H1 (cell line): ENCODE measurements at regions of chr10 and their contacts with region 1.

Region 1: GRCh38 chr10:101569838-101570766 is 18.0 kb downstream of the POLL start:
- DNase-seq: peak in 1 of 2 experiments; percentile 95
- H3K4me3 ChIP-seq: peak overlapping the region; percentile 34 to 72 (median 66)
- H3K27ac ChIP-seq: no peak overlapping the region
- H3K4me1 ChIP-seq: peaks cover 0 to 20% (median 10%) of the 10 kb centered on the region in 4 experiments; a peak in 5 of 7 replicates
- H3K27me3 ChIP-seq: peaks cover 7 to 73% (median 57%) of the 10 kb centered on the region in 4 experiments
- CTCF ChIP-seq: peak; percentile 61 to 79 (median 79)
- EP300 ChIP-seq: no peak
- POLR2A ChIP-seq: no peak
- RAD21 ChIP-seq: peak; percentile 75 to 85

Region 2: GRCh38 chr10:101297901-101298486 is 272.1 kb before region 1 on chr10:
- CTCF ChIA-PET with region 1: interaction called, 33 read pairs
- POLR2A ChIA-PET with region 1: interaction called, 3 read pairs
- DNase-seq: peak; percentile 74 to 96
- H3K4me3 ChIP-seq: no peak overlapping the region
- H3K27ac ChIP-seq: no peak overlapping the region
- H3K4me1 ChIP-seq: peaks cover 0 to 3% (median 0%) of the 10 kb centered on the region in 4 experiments; a peak in 1 of 7 replicates
- H3K27me3 ChIP-seq: peaks cover 7 to 39% (median 29%) of the 10 kb centered on the region in 4 experiments
- CTCF ChIP-seq: peak; percentile 88 to 98 (median 96)
- EP300 ChIP-seq: no peak
- POLR2A ChIP-seq: no peak
- RAD21 ChIP-seq: peak; percentile 51 to 61

Region 3: GRCh38 chr10:101467286-101467770 is 102.8 kb before region 1 on chr10:
- CTCF ChIA-PET with region 1: interaction called, 12 read pairs
- POLR2A ChIA-PET with region 1: no interaction called
- DNase-seq: no peak
- H3K4me3 ChIP-seq: no peak overlapping the region
- H3K27ac ChIP-seq: no peak overlapping the region
- H3K4me1 ChIP-seq: peaks cover 1 to 6% (median 4%) of the 10 kb centered on the region in 4 experiments; a peak in 5 of 7 replicates
- H3K27me3 ChIP-seq: no peaks in the 10 kb centered on the region
- CTCF ChIP-seq: peak in 2 of 3 experiments; percentile 75 to 85; a peak in 3 of 4 replicates
- EP300 ChIP-seq: no peak
- POLR2A ChIP-seq: no peak
- RAD21 ChIP-seq: peak; percentile 56 to 69

Region 4: DNA sequence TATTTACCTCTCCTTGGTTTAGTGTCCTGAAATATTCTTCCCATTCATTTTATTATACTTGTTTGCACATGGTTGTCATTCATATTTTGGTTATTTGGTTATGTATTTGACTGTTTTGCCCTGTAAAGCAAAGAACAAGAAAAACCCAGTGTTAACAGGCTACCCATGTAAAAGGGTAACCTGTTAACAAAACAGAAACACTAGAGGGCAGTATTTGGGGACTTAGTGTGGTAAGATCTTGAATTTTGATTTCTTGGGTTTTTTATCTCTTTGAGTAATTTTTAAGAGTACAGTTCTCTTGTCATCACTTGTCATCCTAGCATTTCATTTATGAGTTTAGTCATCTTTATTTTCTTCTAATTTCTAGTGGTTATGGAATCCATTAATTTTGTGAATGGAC is 33.3 kb before region 1 on chr10:
- CTCF ChIA-PET with region 1: interaction called, 60 read pairs
- POLR2A ChIA-PET with region 1: interaction called, 3 read pairs
- DNase-seq: no peak
- H3K4me3 ChIP-seq: no peak overlapping the region
- H3K27ac ChIP-seq: no peak overlapping the region
- H3K4me1 ChIP-seq: no peaks in the 10 kb centered on the region
- H3K27me3 ChIP-seq: no peaks in the 10 kb centered on the region
- CTCF ChIP-seq: peak in 2 of 3 experiments; percentile 38 to 60; a peak in 2 of 4 replicates
- EP300 ChIP-seq: no peak
- POLR2A ChIP-seq: no peak
- RAD21 ChIP-seq: peak in 1 of 2 experiments; percentile 22; a peak in 1 of 4 replicates

Region 5: DNA sequence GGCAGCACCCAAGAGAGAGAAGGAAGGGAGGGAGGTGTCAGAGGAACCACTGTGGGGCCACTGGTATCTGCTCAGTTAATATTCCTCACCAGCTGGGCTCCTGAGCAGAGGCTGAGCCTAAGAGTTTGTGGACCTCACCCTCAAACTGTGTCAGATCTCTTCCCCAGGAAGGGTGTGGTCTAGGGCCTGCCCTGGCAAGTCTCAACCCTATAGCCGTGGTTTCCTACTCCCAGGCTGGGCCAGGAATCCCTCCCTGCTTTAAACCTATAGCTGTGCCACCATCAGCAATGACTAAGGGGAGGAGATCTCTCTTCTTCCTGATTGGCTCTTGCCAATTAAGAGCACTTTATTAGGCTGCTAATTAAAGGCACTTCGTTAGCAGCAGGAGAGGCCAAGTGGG is 11.9 kb before region 1 on chr10:
- CTCF ChIA-PET with region 1: interaction called, 65 read pairs
- POLR2A ChIA-PET with region 1: interaction called, 9 read pairs
- DNase-seq: no peak
- H3K4me3 ChIP-seq: no peak overlapping the region
- H3K27ac ChIP-seq: no peak overlapping the region
- H3K4me1 ChIP-seq: peaks cover 0 to 2% (median 0%) of the 10 kb centered on the region in 4 experiments; a peak in 2 of 7 replicates
- H3K27me3 ChIP-seq: no peaks in the 10 kb centered on the region
- CTCF ChIP-seq: no peak
- EP300 ChIP-seq: no peak
- POLR2A ChIP-seq: no peak
- RAD21 ChIP-seq: no peak

Region 6: GRCh38 chr10:101602761-101603398 is 32.8 kb after region 1 on chr10:
- CTCF ChIA-PET with region 1: interaction called, 13 read pairs
- POLR2A ChIA-PET with region 1: interaction called, 4 read pairs
- DNase-seq: peak; percentile 81 to 94
- H3K4me3 ChIP-seq: no peak overlapping the region
- H3K27ac ChIP-seq: no peak overlapping the region
- H3K4me1 ChIP-seq: peaks cover 2 to 9% (median 3%) of the 10 kb centered on the region in 4 experiments; a peak in 4 of 7 replicates
- H3K27me3 ChIP-seq: no peaks in the 10 kb centered on the region
- CTCF ChIP-seq: peak; percentile 93 to 100 (median 97)
- EP300 ChIP-seq: no peak
- POLR2A ChIP-seq: no peak
- RAD21 ChIP-seq: peak; percentile 98

Region 7: GRCh38 chr10:101670635-101671034 is 100.5 kb after region 1 on chr10:
- CTCF ChIA-PET with region 1: no interaction called
- POLR2A ChIA-PET with region 1: no interaction called
- DNase-seq: no peak
- H3K4me3 ChIP-seq: no peak overlapping the region
- H3K27ac ChIP-seq: no peak overlapping the region
- H3K4me1 ChIP-seq: no peaks in the 10 kb centered on the region
- H3K27me3 ChIP-seq: no peaks in the 10 kb centered on the region
- CTCF ChIP-seq: no peak
- EP300 ChIP-seq: no peak
- POLR2A ChIP-seq: no peak
- RAD21 ChIP-seq: no peak